ENCODE measurements at regions of chr10 and their contacts with region 1.

Region 1: GRCh38 chr10:35696392-35697287 is 54.5 kb upstream of the FZD8 start:
- DNase-seq: no peak
- ATAC-seq: no peak
- H3K4me3 Mint-ChIP-seq: no peak overlapping the region
- H3K27ac Mint-ChIP-seq: no peak overlapping the region
- H3K4me1 Mint-ChIP-seq: no peaks in the 10 kb centered on the region
- H3K27me3 Mint-ChIP-seq: peaks cover 2% of the 10 kb centered on the region

Region 2: DNA sequence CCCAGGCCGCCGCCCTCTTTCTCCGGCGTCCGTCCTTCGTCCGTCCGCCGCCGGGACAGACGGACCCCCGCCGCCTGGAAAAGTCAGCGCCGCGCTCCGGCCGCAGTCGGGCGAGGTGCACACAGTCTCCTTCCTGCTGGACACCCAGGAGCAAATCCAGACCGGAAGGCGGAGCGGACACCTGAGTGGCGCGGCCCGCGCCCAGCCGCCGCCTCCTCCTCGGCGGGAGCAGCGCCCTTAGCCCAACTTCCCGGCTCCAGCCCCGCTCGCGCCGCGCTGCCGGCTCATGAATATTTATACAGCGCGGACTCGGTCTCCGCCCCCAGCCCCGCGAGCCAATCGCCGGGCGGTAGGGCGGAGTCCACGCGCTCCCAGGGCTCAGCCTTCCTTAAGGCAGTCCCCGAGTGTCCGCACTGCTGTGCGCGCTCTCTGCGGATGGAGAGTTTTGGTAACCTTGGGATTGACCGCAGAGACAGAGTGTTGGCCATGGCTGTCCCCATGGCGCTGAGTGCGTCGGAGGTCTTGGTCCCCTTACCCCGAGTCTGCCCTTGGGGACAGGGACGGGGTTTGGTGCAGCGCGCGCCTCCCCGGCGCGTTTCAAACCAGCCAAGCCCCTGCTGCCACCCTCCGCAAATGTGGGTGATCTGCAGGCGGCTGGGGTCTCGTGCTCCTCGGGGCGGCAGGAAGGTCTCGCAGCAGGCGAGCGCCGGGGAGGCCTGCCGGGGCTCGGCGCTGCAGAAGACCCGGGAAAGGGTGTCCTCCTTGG is 54.4 kb before region 1 on chr10 and contains the start of gene FZD8:
- CTCF ChIA-PET with region 1: no interaction called
- POLR2A ChIA-PET with region 1: no interaction called
- intact Hi-C with region 1: loop called in 1 of 2 experiments (anchors 5 kb)
- DNase-seq: peak; percentile 85
- ATAC-seq: peak; percentile 90
- H3K4me3 Mint-ChIP-seq: peak within 1 kb of the TSS; percentile 71
- H3K27ac Mint-ChIP-seq: no peak within 1 kb of the TSS
- H3K4me1 Mint-ChIP-seq: peaks cover 20% of the 10 kb centered on the region
- H3K27me3 Mint-ChIP-seq: peaks cover 43% of the 10 kb centered on the region
- total RNA-seq, gene FZD8: 0.16 to 0.18 TPM

Measured in activated CD4-positive, alpha-beta T cell treated with anti-CD3 and anti-CD28 coated beads for 36 hours (primary cell).